ENCODE measurements at regions of chr6 and their contacts with region 1.

Region 1: GRCh38 chr6:53718597-53719460 is 53.3 kb upstream of the KLHL31 start:
- DNase-seq: peak; percentile 45 to 65 (median 50)
- ATAC-seq: peak; percentile 83
- H3K4me3 ChIP-seq: no peak overlapping the region
- H3K27ac ChIP-seq: no peak overlapping the region
- H3K4me1 ChIP-seq: no peaks in the 10 kb centered on the region
- H3K27me3 ChIP-seq: no peaks in the 10 kb centered on the region
- CTCF ChIP-seq: peak; percentile 62 to 74 (median 71)
- EP300 ChIP-seq: no peak
- POLR2A ChIP-seq: no peak
- RAD21 ChIP-seq: peak in 1 of 2 experiments; percentile 46; a peak in 2 of 4 replicates

Region 2: DNA sequence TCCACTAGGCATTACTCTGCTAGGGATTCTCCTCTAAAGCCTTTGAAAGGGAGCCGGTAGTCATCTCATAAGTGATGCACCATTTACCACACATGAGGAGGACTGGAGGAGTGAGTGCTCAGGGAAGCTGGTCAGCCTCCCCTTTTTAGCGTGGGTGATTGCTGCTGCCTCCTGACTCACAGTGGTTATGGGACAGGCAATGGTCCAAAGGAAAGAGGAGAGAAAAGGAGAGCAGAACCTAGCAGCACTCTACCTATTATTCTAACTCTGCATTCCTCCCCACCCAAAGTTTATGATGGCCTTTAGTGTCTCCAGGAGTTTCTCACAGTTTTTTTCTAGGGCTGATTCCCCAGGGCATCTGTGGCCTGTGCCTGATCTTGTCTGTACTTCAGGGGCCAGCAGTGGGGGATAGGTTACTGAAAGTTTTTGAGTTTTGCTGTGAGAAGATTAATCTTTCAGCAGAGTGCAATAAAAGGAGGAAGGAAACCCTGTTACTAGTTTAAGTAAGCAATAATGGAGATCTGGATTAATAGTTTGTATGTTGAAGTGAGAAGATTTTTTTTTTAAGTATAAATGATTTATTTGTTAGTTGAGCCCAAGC is 137.6 kb before region 1 on chr6:
- CTCF ChIA-PET with region 1: no interaction called
- POLR2A ChIA-PET with region 1: no interaction called
- in situ Hi-C with region 1: no loop called
- intact Hi-C with region 1: no loop called
- DNase-seq: no peak
- ATAC-seq: no peak
- H3K4me3 ChIP-seq: no peak overlapping the region
- H3K27ac ChIP-seq: no peak overlapping the region
- H3K4me1 ChIP-seq: no peaks in the 10 kb centered on the region
- H3K27me3 ChIP-seq: peaks cover 2 to 5% of the 10 kb centered on the region in 2 experiments; a peak in 2 of 5 replicates
- CTCF ChIP-seq: no peak
- EP300 ChIP-seq: no peak
- POLR2A ChIP-seq: no peak
- RAD21 ChIP-seq: no peak

Region 3: DNA sequence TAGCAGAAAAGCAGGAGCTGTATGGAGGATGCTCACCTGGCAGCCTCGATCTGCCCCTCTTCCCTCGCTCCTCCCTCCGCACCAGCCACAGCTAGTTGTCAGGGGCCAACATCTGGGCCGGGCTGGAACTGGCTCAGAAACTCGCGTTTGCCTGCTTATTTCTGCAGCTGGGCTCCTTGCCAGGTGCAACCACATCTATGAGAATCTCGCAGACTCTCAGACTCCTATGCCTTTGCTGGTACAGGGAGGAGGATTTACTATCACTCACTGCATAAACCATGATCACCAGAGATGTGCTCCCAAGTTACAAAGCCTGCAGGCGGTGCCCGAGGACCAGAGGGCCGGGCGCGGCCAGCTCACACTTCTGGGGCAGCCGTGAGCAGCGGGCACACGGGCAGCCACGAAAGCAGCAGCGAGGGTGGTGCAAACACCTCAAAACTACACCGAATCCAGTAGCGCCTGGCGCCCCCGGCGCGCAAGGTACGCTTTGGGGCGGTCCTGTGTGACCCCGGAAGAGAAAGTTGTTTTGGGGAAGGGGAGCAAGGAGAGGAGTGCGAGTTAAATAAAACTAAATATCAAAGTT is 75.4 kb after region 1 on chr6:
- CTCF ChIA-PET with region 1: no interaction called
- POLR2A ChIA-PET with region 1: no interaction called
- in situ Hi-C with region 1: no loop called
- intact Hi-C with region 1: no loop called
- DNase-seq: no peak
- ATAC-seq: no peak
- H3K4me3 ChIP-seq: no peak overlapping the region
- H3K27ac ChIP-seq: no peak overlapping the region
- H3K4me1 ChIP-seq: peaks cover 0 to 16% of the 10 kb centered on the region in 2 experiments; a peak in 1 of 5 replicates
- H3K27me3 ChIP-seq: peaks cover 9 to 30% of the 10 kb centered on the region in 2 experiments; a peak in 3 of 5 replicates
- CTCF ChIP-seq: no peak
- EP300 ChIP-seq: no peak
- POLR2A ChIP-seq: no peak
- RAD21 ChIP-seq: no peak

Region 4: GRCh38 chr6:53811082-53811481 is 92.3 kb after region 1 on chr6:
- CTCF ChIA-PET with region 1: no interaction called
- POLR2A ChIA-PET with region 1: no interaction called
- in situ Hi-C with region 1: no loop called
- intact Hi-C with region 1: no loop called
- DNase-seq: no peak
- ATAC-seq: no peak
- H3K4me3 ChIP-seq: no peak overlapping the region
- H3K27ac ChIP-seq: no peak overlapping the region
- H3K4me1 ChIP-seq: no peaks in the 10 kb centered on the region
- H3K27me3 ChIP-seq: no peaks in the 10 kb centered on the region
- CTCF ChIP-seq: no peak
- EP300 ChIP-seq: no peak
- POLR2A ChIP-seq: no peak
- RAD21 ChIP-seq: no peak

Region 5: DNA sequence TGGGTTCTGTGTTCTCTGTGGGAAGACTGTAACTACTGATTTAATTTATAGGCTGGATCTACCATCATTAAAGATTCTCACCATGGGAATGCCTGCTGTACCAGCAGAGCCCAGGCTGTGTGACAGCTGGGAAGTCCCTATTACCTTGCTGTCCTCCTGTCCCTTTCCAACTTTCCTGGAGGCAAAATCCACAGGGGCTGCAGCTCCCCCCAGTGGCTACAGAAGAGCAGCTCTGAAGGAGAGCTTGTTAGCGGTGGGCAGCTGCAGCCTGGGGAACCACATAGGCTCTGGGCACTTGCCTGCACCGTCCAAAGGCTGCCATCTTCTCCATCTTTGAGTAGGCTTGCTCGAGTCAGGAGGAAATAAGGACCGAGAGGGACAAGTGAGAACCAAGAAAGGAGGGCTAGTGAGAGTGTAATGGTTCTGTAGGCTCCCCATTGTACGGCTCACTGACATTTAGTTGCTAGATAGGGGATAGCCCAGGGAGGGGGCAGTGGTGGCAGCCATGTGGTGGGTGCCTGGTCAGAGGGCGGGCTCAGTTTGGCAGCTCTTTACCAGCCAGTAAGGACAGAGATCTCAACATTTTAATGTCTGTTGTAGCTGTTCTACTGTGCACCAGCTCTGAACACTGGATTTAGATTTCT is 237.4 kb after region 1 on chr6:
- CTCF ChIA-PET with region 1: no interaction called
- POLR2A ChIA-PET with region 1: no interaction called
- in situ Hi-C with region 1: no loop called
- intact Hi-C with region 1: loop called (anchors 2 kb)
- DNase-seq: peak; percentile 9 to 21 (median 14)
- ATAC-seq: peak; percentile 72
- H3K4me3 ChIP-seq: no peak overlapping the region
- H3K27ac ChIP-seq: no peak overlapping the region
- H3K4me1 ChIP-seq: no peaks in the 10 kb centered on the region
- H3K27me3 ChIP-seq: no peaks in the 10 kb centered on the region
- CTCF ChIP-seq: peak; percentile 31 to 58 (median 39)
- EP300 ChIP-seq: no peak
- POLR2A ChIP-seq: no peak
- RAD21 ChIP-seq: peak in 1 of 2 experiments; percentile 28; a peak in 1 of 4 replicates